ENCODE measurements at regions of chr19 and their contacts with region 1.

Region 1: GRCh38 chr19:1241417-1242095 is at the start of gene ATP5F1D:
- DNase-seq: peak; percentile 96
- ATAC-seq: peak; percentile 76
- H3K4me3 Mint-ChIP-seq: peak within 1 kb of the TSS; percentile 73
- H3K27ac Mint-ChIP-seq: peak within 1 kb of the TSS; percentile 84
- H3K4me1 Mint-ChIP-seq: peaks cover 35% of the 10 kb centered on the region
- H3K27me3 Mint-ChIP-seq: peaks cover 13% of the 10 kb centered on the region
- total RNA-seq, gene ATP5F1D: 190 to 221 TPM

Region 2: GRCh38 chr19:984165-984967 is 257.2 kb before region 1 on chr19 and contains the start of gene WDR18:
- CTCF ChIA-PET with region 1: interaction called, 12 read pairs
- DNase-seq: peak; percentile 94
- ATAC-seq: peak; percentile 93
- H3K4me3 Mint-ChIP-seq: peak within 1 kb of the TSS; percentile 90
- H3K27ac Mint-ChIP-seq: peak within 1 kb of the TSS; percentile 89
- H3K4me1 Mint-ChIP-seq: peaks cover 29% of the 10 kb centered on the region
- H3K27me3 Mint-ChIP-seq: no peaks in the 10 kb centered on the region
- total RNA-seq, gene WDR18: 64.5 to 87.9 TPM

Region 3: GRCh38 chr19:1205114-1206062 is 36.2 kb before region 1 on chr19 and contains the start of gene STK11:
- CTCF ChIA-PET with region 1: interaction called, 10 read pairs
- DNase-seq: peak; percentile 100
- ATAC-seq: peak; percentile 97
- H3K4me3 Mint-ChIP-seq: peak within 1 kb of the TSS; percentile 92
- H3K27ac Mint-ChIP-seq: peak within 1 kb of the TSS; percentile 86
- H3K4me1 Mint-ChIP-seq: peaks cover 29% of the 10 kb centered on the region
- H3K27me3 Mint-ChIP-seq: no peaks in the 10 kb centered on the region
- total RNA-seq, gene STK11: 76.7 to 80.5 TPM

Region 4: DNA sequence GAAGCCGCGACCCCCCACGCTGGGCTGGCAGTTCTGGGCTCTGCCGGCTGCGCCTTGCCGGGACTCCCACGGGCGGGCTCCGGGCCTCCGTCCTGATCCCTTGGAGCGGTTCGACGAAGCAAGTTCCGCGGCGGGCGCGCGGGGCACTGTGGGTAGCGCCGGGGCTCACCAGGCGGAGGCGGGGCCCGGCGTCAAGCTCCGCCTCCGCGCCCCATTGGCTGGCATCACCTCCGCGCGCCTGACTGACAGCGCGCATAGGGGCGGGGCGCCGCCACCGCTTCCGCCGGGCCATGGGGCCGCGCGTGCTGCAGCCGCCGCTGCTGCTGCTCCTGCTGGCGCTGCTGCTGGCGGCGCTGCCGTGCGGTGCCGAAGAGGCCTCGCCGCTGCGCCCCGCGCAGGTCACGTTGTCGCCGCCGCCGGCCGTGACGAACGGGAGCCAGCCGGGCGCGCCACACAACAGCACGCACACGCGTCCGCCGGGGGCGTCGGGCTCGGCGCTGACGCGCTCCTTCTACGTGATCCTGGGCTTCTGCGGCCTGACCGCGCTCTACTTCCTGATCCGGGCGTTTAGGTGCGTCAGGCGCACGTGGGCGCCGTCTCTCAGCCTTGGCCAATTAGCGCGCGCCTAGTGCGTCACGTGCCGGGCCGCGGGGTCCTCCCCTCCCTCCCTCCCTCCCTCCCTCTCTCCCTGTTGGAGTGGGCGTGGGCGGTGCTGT is 33.9 kb after region 1 on chr19 and contains the start of gene FAM174C:
- CTCF ChIA-PET with region 1: interaction called, 32 read pairs
- DNase-seq: peak; percentile 98
- ATAC-seq: peak; percentile 87
- H3K4me3 Mint-ChIP-seq: peak within 1 kb of the TSS; percentile 74
- H3K27ac Mint-ChIP-seq: peak within 1 kb of the TSS; percentile 88
- H3K4me1 Mint-ChIP-seq: peaks cover 56% of the 10 kb centered on the region
- H3K27me3 Mint-ChIP-seq: no peaks in the 10 kb centered on the region
- total RNA-seq, gene FAM174C: 54.7 to 60.3 TPM

Region 5: GRCh38 chr19:1295169-1296012 is 53.8 kb after region 1 on chr19:
- CTCF ChIA-PET with region 1: no interaction called
- DNase-seq: no peak
- ATAC-seq: peak; percentile 66
- H3K4me3 Mint-ChIP-seq: no peak overlapping the region
- H3K27ac Mint-ChIP-seq: no peak overlapping the region
- H3K4me1 Mint-ChIP-seq: no peaks in the 10 kb centered on the region
- H3K27me3 Mint-ChIP-seq: peaks cover 7% of the 10 kb centered on the region

Region 6: GRCh38 chr19:1373534-1374249 is 132.1 kb after region 1 on chr19:
- CTCF ChIA-PET with region 1: interaction called, 12 read pairs
- DNase-seq: no peak
- ATAC-seq: no peak
- H3K4me3 Mint-ChIP-seq: no peak overlapping the region
- H3K27ac Mint-ChIP-seq: no peak overlapping the region
- H3K4me1 Mint-ChIP-seq: no peaks in the 10 kb centered on the region
- H3K27me3 Mint-ChIP-seq: no peaks in the 10 kb centered on the region

Measured in activated CD8-positive, alpha-beta memory T cell treated with anti-CD3 and anti-CD28 coated beads, Interleukin-2, amount 10 ng/mL, durations not matched to agents 7 days and 5 days (primary cell).